HEK293 (cell line): ENCODE measurements at regions of chr15 and their contacts with region 1.

Region 1: DNA sequence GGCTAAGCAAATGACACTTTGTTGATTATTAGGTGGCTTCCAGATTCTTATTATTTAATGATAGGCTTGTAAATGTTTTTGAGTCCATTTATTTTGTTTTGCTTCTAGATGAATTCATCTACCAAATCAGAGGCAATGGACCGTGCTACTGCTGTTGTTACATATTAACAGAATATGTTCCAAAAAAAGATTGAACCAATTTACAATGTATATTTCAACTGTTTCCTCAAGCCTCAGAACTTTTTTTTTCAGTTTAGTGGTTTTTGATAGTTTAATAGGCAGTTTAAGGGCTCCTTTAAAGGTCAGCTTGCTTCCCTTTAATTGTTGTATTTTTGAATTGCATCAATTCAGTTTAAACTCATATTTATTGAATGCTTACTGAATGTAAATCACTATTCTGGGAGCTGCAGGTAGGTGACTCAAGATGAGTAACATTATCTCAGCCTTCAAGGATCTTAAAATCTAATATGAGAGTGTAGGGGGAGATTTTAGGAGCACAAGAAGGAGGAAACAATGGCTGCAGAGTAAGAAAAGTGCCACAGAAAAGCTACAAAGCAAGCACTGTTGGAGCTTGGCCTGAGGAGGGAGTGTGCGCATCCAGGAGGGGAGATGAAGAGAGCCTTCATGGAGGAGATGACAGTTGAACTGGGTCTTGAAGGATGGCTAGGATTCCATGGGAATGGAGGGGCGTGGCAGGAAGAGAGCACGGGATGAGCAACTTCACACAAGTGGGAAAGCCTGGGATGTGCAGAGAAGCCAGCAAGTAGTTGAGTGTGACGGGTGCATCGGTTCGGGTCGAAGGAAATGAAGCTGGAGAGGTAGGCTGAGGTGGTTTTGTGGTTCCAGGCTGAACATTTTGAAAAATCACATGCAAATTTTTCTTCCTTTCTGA is 14.7 kb downstream of the MAP2K1 start:
- H3K4me3 ChIP-seq: no peak overlapping the region
- H3K27ac ChIP-seq: no peak overlapping the region
- H3K4me1 ChIP-seq: peaks cover 15% of the 10 kb centered on the region
- CTCF ChIP-seq: no peak; the same call in 1 of the 2 replicates

Region 2: DNA sequence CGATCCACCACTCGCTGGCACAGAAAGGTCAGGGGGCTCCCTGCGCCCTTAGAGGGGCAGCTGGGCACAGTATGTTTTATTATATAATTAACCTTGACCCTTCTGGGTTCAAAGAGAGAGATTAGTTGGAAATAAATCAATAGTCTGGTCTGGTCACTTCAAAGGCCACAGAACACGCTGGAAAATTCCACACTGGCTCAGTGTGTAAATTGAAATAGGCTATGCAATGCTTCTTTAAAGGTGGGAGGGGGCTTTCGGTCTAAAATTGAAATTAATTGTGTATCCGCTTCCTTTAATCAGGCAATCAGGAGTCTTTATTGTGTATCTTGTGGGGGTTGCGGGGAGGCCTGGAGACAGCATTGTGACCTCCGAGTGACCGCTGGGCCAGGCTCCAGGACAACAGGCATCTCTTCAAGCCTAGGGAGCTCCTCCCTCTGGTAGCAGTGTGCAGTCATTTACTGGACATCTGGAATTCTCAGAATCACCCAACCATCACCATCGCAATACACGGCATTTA is 1088.9 kb before region 1 on chr15:
- CTCF ChIA-PET with region 1: no interaction called
- POLR2A ChIA-PET with region 1: no interaction called
- H3K4me3 ChIP-seq: no peak overlapping the region
- H3K27ac ChIP-seq: no peak overlapping the region
- H3K4me1 ChIP-seq: no peaks in the 10 kb centered on the region
- CTCF ChIP-seq: no peak

Region 3: DNA sequence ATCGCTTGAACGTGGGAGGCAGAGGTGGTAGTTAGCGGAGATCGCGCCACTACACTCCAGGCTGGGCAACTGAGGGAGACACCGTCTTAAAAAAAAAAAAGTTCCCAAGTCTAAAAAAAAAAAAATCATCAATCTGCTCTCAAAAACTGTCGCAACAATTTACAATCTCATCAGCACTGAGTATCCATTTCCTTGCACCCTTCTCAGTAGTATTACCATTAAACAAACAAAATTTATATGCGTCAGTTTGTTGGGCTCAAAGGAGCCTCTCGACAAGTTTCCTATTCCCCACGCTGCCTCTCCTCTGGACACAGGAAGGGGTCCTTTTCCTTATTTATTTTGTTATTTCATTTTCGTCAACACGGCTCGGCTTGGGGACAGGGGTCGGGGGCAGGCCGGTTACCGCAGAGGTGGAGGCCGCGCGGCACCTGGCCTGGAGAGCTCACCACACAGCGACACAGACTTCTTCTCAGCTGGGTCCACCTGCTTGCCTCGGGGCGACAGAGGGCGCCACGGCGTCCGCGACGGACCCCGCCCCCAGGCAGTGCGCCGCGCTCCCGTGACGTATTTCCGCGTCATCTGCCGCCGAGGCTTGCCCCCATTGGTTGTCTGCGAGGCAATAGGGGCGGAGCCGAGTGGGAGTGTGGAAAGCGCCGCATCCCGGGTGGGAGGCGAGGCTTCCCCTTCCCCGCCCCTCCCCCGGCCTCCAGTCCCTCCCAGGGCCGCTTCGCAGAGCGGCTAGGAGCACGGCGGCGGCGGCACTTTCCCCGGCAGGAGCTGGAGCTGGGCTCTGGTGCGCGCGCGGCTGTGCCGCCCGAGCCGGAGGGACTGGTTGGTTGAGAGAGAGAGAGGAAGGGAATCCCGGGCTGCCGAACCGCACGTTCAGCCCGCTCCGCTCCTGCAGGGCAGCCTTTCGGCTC is 14.9 kb before region 1 on chr15 and contains the start of gene MAP2K1:
- CTCF ChIA-PET with region 1: interaction called, 13 read pairs
- POLR2A ChIA-PET with region 1: interaction called, 7 read pairs
- H3K4me3 ChIP-seq: peak within 1 kb of the TSS; percentile 88
- H3K27ac ChIP-seq: peak within 1 kb of the TSS; percentile 83
- H3K4me1 ChIP-seq: peaks cover 5% of the 10 kb centered on the region; the same call in 1 of the 2 replicates
- CTCF ChIP-seq: peak; percentile 100

Region 4: DNA sequence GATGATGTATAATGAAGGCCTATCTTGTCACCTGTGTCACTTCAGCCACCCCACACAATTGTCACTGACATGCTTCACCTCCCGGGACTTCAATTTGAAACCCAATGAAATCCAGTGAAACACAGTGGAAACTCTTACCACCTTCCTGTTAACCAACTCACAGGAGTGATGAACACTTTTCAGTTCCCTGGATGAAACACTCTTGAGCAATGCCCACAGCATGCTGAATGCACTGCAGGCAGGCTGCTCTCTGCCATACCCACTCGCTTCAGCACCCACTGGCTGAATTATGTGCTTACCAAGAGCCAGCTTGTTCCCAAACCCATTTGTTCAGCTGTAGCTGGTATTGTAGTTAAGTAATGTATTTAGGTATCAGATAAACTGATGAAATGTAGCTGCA is 32.4 kb after region 1 on chr15:
- CTCF ChIA-PET with region 1: no interaction called
- POLR2A ChIA-PET with region 1: no interaction called
- H3K4me3 ChIP-seq: no peak overlapping the region
- H3K27ac ChIP-seq: no peak overlapping the region
- H3K4me1 ChIP-seq: no peaks in the 10 kb centered on the region
- CTCF ChIP-seq: no peak

Region 5: DNA sequence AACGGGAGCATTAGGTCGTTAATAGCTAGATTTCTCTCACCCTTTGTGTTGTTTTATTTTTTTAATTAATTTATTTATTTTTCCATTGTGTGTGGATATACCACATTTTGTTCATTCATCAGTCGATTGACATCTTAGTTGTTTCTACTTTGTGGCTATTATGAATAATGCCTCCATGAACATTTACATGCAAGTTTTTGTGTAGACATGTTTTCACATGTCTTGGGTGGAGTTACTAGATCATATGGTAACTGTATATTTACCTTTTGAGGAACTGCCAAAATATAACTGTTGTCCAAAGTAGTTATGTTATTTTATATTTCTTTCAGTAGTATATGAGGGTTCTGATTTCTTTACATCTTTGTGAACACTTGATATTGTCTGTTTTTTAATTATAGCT is 122.5 kb after region 1 on chr15:
- CTCF ChIA-PET with region 1: no interaction called
- POLR2A ChIA-PET with region 1: interaction called, 11 read pairs
- H3K4me3 ChIP-seq: no peak overlapping the region
- H3K27ac ChIP-seq: no peak overlapping the region
- H3K4me1 ChIP-seq: no peaks in the 10 kb centered on the region
- CTCF ChIP-seq: no peak